IMR-90 (cell line): ENCODE measurements at regions of chr20 and their contacts with region 1.

Region 1: GRCh38 chr20:14902432-14903089 is 565.1 kb upstream of the FLRT3 start:
- DNase-seq: no peak
- ATAC-seq: no peak
- H3K4me3 ChIP-seq: no peak overlapping the region
- H3K27ac ChIP-seq: no peak overlapping the region
- H3K4me1 ChIP-seq: no peaks in the 10 kb centered on the region
- H3K27me3 ChIP-seq: no peaks in the 10 kb centered on the region
- CTCF ChIP-seq: no peak
- POLR2A ChIP-seq: no peak
- RAD21 ChIP-seq: no peak

Region 2: GRCh38 chr20:14932040-14932439 is 29.5 kb after region 1 on chr20:
- CTCF ChIA-PET with region 1: no interaction called
- POLR2A ChIA-PET with region 1: interaction called, 11 read pairs
- dilution Hi-C with region 1: no loop called
- in situ Hi-C with region 1: no loop called
- intact Hi-C with region 1: no loop called
- DNase-seq: no peak
- ATAC-seq: no peak
- H3K4me3 ChIP-seq: no peak overlapping the region
- H3K27ac ChIP-seq: no peak overlapping the region
- H3K4me1 ChIP-seq: no peaks in the 10 kb centered on the region
- H3K27me3 ChIP-seq: no peaks in the 10 kb centered on the region
- CTCF ChIP-seq: no peak
- POLR2A ChIP-seq: no peak
- RAD21 ChIP-seq: no peak